OCI-LY7 (cell line): ENCODE measurements at regions of chr3 and their contacts with region 1.

Region 1: DNA sequence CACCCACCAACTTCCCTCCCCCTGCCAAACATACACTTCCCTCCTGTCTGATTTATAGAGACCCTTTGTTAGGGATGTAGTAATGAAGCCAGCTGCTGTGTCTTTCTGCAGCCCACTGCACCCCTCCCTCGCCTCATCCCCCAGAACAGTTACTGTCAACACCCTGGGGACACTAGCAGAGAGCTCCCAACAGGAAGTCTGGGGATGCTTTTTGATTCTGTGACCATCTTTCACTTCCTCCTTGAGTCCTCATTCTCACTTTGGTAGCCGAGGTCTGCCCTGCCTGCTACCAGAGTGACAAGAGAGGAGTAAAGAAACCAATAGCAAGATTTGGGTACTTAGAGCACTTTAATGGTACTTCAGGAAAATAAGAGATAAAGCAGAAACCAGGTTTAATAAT is 201.6 kb downstream of the SATB1 start:
- DNase-seq: peak; percentile 97
- H3K4me3 ChIP-seq: peak overlapping the region; percentile 61
- H3K27ac ChIP-seq: peak overlapping the region; percentile 95
- H3K4me1 ChIP-seq: peaks cover 81% of the 10 kb centered on the region
- CTCF ChIP-seq: no peak

Region 2: DNA sequence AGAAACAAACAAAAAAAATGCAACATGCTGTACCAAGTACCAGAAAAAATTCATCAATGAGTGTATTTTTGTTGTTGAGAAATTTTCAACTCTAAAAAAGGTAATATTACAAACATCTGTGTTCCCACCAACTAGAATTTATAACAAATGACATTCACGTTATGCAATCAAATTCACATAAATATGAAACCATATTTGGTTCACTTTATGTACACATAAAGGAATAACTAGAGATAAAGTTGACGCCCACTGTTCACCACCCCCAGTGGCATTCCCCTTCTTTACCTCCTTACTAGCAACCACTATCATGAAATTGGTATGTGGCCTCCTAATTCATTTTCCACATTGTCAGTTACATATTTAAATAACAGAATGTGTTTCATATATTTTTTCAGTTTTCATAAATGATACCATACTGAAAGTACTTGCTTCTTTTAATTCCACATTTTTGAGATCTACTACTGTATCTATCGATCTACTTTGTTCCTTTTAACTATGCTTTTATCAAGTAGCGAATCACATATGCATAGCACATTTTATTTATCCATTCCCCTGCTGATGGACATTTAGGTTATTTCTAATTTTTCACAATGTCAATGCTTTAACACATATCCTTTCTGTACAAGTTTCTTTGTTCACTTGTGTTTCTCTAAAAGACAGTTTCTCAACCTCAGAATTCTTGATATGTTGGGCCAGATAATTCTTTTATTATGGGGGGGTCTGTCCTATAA is 515.6 kb before region 1 on chr3:
- CTCF ChIA-PET with region 1: no interaction called
- POLR2A ChIA-PET with region 1: no interaction called
- intact Hi-C with region 1: no loop called
- DNase-seq: no peak
- H3K4me3 ChIP-seq: no peak overlapping the region
- H3K27ac ChIP-seq: no peak overlapping the region
- H3K4me1 ChIP-seq: no peaks in the 10 kb centered on the region
- CTCF ChIP-seq: no peak

Region 3: GRCh38 chr3:17742108-17742879 is 481.3 kb before region 1 on chr3 and contains the start of gene TBC1D5:
- CTCF ChIA-PET with region 1: no interaction called
- POLR2A ChIA-PET with region 1: interaction called, 4 read pairs
- intact Hi-C with region 1: loop called (anchors 5 kb)
- DNase-seq: peak; percentile 98
- H3K4me3 ChIP-seq: peak within 1 kb of the TSS; percentile 81
- H3K27ac ChIP-seq: peak within 1 kb of the TSS; percentile 91
- H3K4me1 ChIP-seq: peaks cover 57% of the 10 kb centered on the region
- CTCF ChIP-seq: no peak
- total RNA-seq, gene TBC1D5: 82.4 and 85.5 TPM in 2 replicates

Region 4: DNA sequence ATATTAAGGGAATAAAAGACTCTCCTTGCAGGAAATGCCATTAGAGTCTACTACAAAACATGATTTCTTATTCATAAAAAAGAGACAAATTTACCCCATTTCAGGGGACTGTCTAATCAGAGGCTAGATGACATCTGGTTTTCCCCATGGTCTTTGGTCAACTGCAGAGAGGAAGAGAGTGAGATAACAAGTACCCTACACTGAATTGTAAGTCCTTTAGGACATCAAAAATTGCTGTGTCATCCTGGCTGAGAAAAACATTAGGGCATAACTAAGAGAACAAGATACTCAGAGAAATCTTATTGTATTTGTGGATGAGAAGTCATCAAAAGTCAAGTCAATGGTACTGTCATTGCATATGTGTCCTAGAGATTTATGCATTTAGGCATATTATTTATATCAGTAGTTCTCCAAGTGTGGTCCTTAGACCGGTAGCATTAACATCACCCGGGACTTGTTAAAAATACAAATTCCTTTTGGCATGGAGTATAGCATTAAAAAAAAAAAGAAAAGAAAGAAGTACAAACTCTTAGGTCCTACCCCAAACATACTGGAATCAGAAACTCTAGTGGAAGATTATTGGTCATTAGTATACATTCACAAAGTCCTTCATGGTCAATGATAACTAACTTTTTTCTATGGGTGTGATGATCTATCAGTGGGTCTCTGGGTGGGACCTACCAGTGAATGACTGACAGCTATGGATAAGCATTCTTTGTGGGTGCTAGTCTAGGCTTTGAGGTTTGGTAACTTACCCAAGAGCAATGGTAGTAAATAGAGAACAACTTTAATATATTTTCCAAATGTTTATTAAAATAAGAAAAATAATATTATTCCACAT is 452.2 kb before region 1 on chr3:
- CTCF ChIA-PET with region 1: no interaction called
- POLR2A ChIA-PET with region 1: no interaction called
- intact Hi-C with region 1: no loop called
- DNase-seq: no peak
- H3K4me3 ChIP-seq: no peak overlapping the region
- H3K27ac ChIP-seq: no peak overlapping the region
- H3K4me1 ChIP-seq: no peaks in the 10 kb centered on the region
- CTCF ChIP-seq: no peak

Region 5: GRCh38 chr3:18208856-18209255 is 14.7 kb before region 1 on chr3:
- CTCF ChIA-PET with region 1: no interaction called
- POLR2A ChIA-PET with region 1: interaction called, 9 read pairs
- intact Hi-C with region 1: loop called (anchors 1 kb)
- DNase-seq: no peak
- H3K4me3 ChIP-seq: no peak overlapping the region
- H3K27ac ChIP-seq: no peak overlapping the region
- H3K4me1 ChIP-seq: peaks cover 30% of the 10 kb centered on the region
- CTCF ChIP-seq: no peak

Region 6: DNA sequence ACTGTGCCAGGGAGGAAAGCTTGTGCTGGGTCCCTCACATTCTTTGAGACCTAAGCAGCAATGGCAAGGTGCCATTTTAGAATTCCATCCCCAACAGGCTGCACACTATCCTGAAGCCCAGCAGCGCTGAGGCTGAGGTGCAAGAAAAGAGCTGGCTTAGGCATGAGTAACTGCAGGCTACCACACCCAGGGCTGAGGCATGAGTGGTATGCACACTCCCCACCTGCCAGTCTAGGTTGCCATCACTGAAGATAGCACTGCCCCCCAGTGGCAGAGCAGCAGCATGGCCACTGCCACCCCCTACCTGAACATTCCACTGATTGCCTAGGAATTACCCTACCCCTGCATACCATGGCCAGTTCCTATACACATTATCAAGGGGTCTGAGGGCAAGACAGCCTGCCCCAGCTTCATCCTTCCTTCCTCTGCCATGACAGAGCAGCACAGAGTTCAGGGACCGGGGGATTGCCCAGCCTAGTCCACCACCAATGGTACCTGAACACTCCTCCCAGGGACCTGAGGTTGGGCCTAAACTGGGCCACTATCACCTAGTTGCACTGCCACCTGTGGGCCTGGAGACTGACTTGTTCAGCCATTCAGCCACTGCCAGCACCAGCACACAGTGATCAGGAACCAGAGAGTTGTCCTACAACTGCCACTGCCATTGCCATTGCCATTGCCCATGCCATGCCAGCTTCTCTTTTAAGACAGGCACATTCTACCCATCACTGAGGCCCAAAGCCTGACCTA is 71.8 kb after region 1 on chr3:
- CTCF ChIA-PET with region 1: no interaction called
- POLR2A ChIA-PET with region 1: no interaction called
- intact Hi-C with region 1: loop called (anchors 1 kb)
- DNase-seq: peak; percentile 68
- H3K4me3 ChIP-seq: no peak overlapping the region
- H3K27ac ChIP-seq: no peak overlapping the region
- H3K4me1 ChIP-seq: no peaks in the 10 kb centered on the region
- CTCF ChIP-seq: peak; percentile 86

Region 7: DNA sequence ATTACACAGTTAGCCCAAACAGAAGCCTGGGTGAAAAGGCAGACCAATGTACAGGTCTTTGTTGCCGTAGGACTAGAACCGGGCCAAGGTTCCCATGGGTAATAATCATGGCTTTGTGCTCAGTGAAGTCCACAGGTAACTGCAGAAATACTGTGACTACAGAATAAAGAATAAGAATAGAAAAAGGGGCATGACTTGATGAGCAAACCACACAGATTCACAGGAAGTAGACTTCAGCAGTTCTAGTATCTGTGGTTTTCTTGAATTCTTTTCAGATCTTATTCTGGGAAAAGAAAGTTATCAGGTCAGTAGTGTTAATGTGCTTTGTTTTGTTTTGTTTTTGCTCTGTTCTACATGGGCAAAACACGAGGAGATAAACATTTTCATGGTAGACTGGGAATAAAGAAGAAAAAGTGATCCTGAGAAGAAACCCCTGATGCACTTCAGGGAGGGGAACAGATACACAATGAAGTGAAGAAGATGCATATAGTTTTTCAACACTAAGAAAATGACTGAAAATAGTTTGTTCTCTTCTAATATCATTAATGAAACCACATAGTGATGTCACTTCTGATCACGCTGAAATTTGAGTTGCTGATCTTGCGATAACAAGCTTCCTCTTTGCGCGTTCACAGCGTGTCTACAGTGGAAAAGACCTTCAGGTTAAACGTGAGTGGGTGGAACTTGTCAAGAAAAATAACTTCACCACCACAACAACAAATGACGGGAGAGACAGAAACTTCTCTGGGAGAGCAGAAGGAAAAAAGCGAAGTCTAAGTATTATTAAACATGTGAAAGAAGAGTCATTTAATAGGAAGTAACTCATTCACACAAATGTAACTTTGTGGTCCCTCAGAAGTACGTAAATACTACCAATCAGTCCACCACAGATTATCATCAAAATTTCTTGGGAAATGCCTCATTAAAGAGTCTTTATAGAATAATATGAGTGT is 517.3 kb after region 1 on chr3:
- CTCF ChIA-PET with region 1: no interaction called
- POLR2A ChIA-PET with region 1: no interaction called
- intact Hi-C with region 1: loop called (anchors 5 kb)
- DNase-seq: peak; percentile 76
- H3K4me3 ChIP-seq: peak overlapping the region; percentile 60
- H3K27ac ChIP-seq: peak overlapping the region; percentile 91
- H3K4me1 ChIP-seq: peaks cover 73% of the 10 kb centered on the region
- CTCF ChIP-seq: no peak